ENCODE measurements at regions of chr10 and their contacts with region 1.

Region 1: DNA sequence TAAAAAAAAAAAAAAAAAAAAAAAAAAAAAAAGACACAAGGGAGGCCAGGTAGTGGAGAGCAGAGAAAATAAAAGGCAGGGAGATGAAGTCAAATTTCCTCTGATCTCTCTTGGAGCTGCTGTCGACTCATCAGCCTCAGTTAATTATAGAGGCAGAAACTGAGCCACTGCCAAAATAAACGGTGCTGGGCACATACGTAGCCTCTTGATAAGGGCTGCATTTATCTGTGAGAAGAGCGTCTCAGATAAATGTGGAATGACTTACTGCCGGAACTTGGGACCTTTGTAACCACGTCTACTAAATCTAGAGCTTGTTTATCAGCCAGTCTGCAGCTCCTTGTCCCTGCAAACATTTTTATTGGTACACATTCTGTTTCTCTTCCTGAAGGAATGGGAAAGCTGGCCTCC is 162.3 kb downstream of the BAMBI start:
- DNase-seq: peak; percentile 79
- ATAC-seq: peak; percentile 8; the same call in 1 of the 2 replicates
- H3K4me3 ChIP-seq: no peak overlapping the region
- H3K27ac ChIP-seq: no peak overlapping the region
- H3K4me1 ChIP-seq: peaks cover 12% of the 10 kb centered on the region
- H3K27me3 ChIP-seq: no peaks in the 10 kb centered on the region
- CTCF ChIP-seq: no peak
- POLR2A ChIP-seq: no peak
- RAD21 ChIP-seq: no peak

Region 2: GRCh38 chr10:28734941-28735759 is 104.5 kb before region 1 on chr10:
- CTCF ChIA-PET with region 1: no interaction called
- POLR2A ChIA-PET with region 1: no interaction called
- dilution Hi-C with region 1: no loop called
- in situ Hi-C with region 1: no loop called
- intact Hi-C with region 1: loop called (anchors 2 kb)
- DNase-seq: peak; percentile 96
- ATAC-seq: peak; percentile 96
- H3K4me3 ChIP-seq: no peak overlapping the region
- H3K27ac ChIP-seq: peak overlapping the region; percentile 40
- H3K4me1 ChIP-seq: peaks cover 5% of the 10 kb centered on the region
- H3K27me3 ChIP-seq: peaks cover 16% of the 10 kb centered on the region
- CTCF ChIP-seq: no peak
- POLR2A ChIP-seq: no peak
- RAD21 ChIP-seq: no peak

Region 3: DNA sequence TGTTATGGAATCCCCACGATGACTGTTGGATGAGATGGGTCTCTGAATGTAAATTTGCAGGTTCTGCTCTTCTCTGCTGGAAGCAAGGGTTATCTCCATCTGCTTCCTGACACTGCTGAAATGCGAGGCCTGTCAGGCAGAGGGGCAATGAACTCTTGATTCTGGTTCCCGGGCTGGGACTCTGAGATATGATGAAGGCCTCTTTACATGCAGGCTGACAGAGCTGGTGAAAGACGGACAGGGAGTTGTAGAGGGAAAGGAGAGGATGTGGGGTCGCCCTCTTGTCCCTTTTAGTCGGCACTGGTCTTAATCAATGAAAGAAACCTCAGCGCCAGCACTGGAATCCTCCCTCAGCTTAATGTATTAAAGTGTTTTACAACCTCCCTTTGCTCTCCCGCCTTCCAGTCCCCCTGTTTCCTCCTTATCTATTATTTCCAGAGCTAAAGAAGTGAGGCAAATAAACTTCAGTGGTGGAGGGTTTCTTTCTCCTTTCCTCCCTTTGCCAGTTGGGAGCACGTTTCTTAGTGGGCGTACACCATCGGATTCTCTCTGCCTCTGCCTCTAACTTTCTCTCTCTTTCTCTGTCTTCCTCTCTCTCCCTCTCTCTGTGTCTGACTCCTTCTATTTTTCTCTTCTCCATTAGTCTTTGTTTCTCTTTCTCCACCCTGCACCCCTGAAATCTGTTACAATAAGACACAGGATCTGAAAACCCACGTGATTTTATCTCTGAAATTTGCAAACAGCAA is 16.7 kb before region 1 on chr10:
- CTCF ChIA-PET with region 1: interaction called, 3 read pairs
- POLR2A ChIA-PET with region 1: interaction called, 10 read pairs
- dilution Hi-C with region 1: no loop called
- in situ Hi-C with region 1: no loop called
- intact Hi-C with region 1: no loop called
- DNase-seq: no peak
- ATAC-seq: no peak
- H3K4me3 ChIP-seq: no peak overlapping the region
- H3K27ac ChIP-seq: no peak overlapping the region
- H3K4me1 ChIP-seq: no peaks in the 10 kb centered on the region
- H3K27me3 ChIP-seq: peaks cover 11% of the 10 kb centered on the region
- CTCF ChIP-seq: no peak
- POLR2A ChIP-seq: no peak
- RAD21 ChIP-seq: no peak

Region 4: GRCh38 chr10:28910956-28911355 is 71.4 kb after region 1 on chr10:
- CTCF ChIA-PET with region 1: no interaction called
- POLR2A ChIA-PET with region 1: no interaction called
- dilution Hi-C with region 1: no loop called
- in situ Hi-C with region 1: no loop called
- intact Hi-C with region 1: loop called (anchors 5 kb)
- DNase-seq: peak; percentile 85
- ATAC-seq: peak; percentile 71
- H3K4me3 ChIP-seq: no peak overlapping the region
- H3K27ac ChIP-seq: no peak overlapping the region
- H3K4me1 ChIP-seq: peaks cover 10% of the 10 kb centered on the region
- H3K27me3 ChIP-seq: no peaks in the 10 kb centered on the region
- CTCF ChIP-seq: no peak
- POLR2A ChIP-seq: no peak
- RAD21 ChIP-seq: no peak

Region 5: DNA sequence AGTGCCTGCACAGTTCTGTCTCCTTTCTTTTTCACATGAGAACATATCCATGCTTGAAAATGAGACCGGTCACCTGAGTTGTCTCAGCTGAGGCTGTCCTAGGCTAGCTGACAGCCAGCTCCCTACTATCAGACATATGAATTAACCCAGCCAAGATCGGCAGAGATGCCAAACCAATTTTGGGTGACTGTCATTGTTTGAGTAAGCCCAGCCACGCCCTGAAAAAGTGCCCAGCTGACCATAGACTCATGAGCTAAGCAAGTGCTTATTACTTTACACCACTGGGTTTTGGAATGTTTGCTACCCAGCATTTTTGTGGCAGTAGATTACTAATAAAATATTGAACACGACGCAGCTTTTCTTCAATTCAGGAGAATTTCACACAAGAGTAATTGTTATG is 184.1 kb after region 1 on chr10:
- CTCF ChIA-PET with region 1: no interaction called
- POLR2A ChIA-PET with region 1: no interaction called
- dilution Hi-C with region 1: no loop called
- in situ Hi-C with region 1: no loop called
- intact Hi-C with region 1: no loop called
- DNase-seq: no peak
- ATAC-seq: no peak
- H3K4me3 ChIP-seq: no peak overlapping the region
- H3K27ac ChIP-seq: no peak overlapping the region
- H3K4me1 ChIP-seq: peaks cover 7% of the 10 kb centered on the region
- H3K27me3 ChIP-seq: peaks cover 2% of the 10 kb centered on the region
- CTCF ChIP-seq: no peak
- POLR2A ChIP-seq: no peak
- RAD21 ChIP-seq: no peak

Region 6: GRCh38 chr10:29304264-29305030 is 464.8 kb after region 1 on chr10:
- CTCF ChIA-PET with region 1: no interaction called
- POLR2A ChIA-PET with region 1: no interaction called
- dilution Hi-C with region 1: no loop called
- in situ Hi-C with region 1: no loop called
- intact Hi-C with region 1: loop called (anchors 5 kb)
- DNase-seq: peak; percentile 70
- ATAC-seq: peak; percentile 98
- H3K4me3 ChIP-seq: no peak overlapping the region
- H3K27ac ChIP-seq: no peak overlapping the region
- H3K4me1 ChIP-seq: no peaks in the 10 kb centered on the region
- H3K27me3 ChIP-seq: no peaks in the 10 kb centered on the region; the same call in 1 of the 2 replicates
- CTCF ChIP-seq: peak; percentile 91
- POLR2A ChIP-seq: no peak
- RAD21 ChIP-seq: peak; percentile 93